GM12878 (cell line): ENCODE measurements at regions of chr9 and their contacts with region 1.

Region 1: GRCh38 chr9:127083138-127083980 is 39.1 kb downstream of the ANGPTL2 start:
- DNase-seq: no peak
- ATAC-seq: no peak
- H3K4me3 ChIP-seq: no peak overlapping the region
- H3K27ac ChIP-seq: no peak overlapping the region
- H3K4me1 ChIP-seq: no peaks in the 10 kb centered on the region
- H3K27me3 ChIP-seq: no peaks in the 10 kb centered on the region
- CTCF ChIP-seq: no peak
- EP300 ChIP-seq: no peak
- POLR2A ChIP-seq: no peak
- RAD21 ChIP-seq: no peak

Region 2: DNA sequence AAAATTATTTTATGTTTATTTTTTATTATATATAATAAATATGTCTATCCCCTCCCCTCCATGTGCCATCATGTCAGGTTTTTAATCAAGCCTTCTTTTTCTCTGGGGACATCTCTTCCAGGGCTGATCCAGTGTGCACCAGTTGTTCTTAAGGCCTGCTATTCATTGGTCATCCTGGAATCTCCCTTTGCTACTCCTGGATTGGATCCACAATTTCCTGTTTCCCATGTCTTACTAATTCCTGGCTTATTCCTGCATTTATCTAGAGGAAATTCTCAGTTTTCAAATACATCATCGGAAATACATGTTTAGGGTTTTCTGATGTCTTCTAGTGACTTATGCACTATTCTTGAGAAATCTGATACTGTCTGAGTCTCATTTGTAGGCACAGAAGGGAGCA is 17.8 kb before region 1 on chr9:
- CTCF ChIA-PET with region 1: no interaction called
- POLR2A ChIA-PET with region 1: no interaction called
- RAD21 ChIA-PET with region 1: no interaction called
- SMC1A ChIA-PET with region 1: interaction called, 12 read pairs
- in situ Hi-C with region 1: no loop called
- intact Hi-C with region 1: no loop called
- DNase-seq: no peak
- ATAC-seq: no peak
- H3K4me3 ChIP-seq: no peak overlapping the region
- H3K27ac ChIP-seq: no peak overlapping the region
- H3K4me1 ChIP-seq: no peaks in the 10 kb centered on the region
- H3K27me3 ChIP-seq: no peaks in the 10 kb centered on the region
- CTCF ChIP-seq: no peak
- EP300 ChIP-seq: no peak
- POLR2A ChIP-seq: no peak
- RAD21 ChIP-seq: no peak